ENCODE measurements at regions of chr9 and their contacts with region 1.

Region 1: GRCh38 chr9:69056191-69056815 is 20.8 kb downstream of the FXN start:
- DNase-seq: no peak
- CTCF ChIP-seq: no peak

Region 2: GRCh38 chr9:69018737-69019136 is 37.6 kb before region 1 on chr9:
- CTCF ChIA-PET with region 1: no interaction called
- POLR2A ChIA-PET with region 1: no interaction called
- DNase-seq: no peak
- CTCF ChIP-seq: no peak

Region 3: GRCh38 chr9:69035438-69036308 is 20.6 kb before region 1 on chr9 and contains the start of gene FXN:
- CTCF ChIA-PET with region 1: interaction called, 56 read pairs
- POLR2A ChIA-PET with region 1: no interaction called
- DNase-seq: peak; percentile 93
- CTCF ChIP-seq: peak; percentile 98

Region 4: GRCh38 chr9:69044240-69045219 is 11.8 kb before region 1 on chr9:
- CTCF ChIA-PET with region 1: interaction called, 19 read pairs
- POLR2A ChIA-PET with region 1: no interaction called
- DNase-seq: no peak
- CTCF ChIP-seq: no peak

Region 5: DNA sequence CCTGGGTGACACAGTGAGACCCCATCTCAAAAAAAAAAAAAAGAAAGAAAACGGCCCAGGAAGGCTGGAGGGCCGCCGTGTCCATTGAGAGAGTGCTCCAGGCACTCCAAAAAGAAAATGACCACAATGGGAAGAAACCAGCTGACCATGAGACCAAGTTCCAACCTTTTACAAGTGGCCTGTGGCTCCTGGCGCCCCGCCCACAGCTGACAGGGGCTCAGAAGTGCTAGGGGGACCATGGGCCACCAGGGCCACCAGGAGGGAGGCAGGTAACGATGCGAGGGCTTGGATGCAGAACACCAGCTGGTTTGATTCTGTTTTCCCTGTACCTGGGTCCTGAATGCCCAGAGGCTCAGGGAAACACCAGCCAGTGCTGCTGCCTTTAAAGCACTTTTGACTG is 13.9 kb after region 1 on chr9:
- CTCF ChIA-PET with region 1: interaction called, 17 read pairs
- POLR2A ChIA-PET with region 1: no interaction called
- DNase-seq: no peak
- CTCF ChIP-seq: no peak

Region 6: GRCh38 chr9:69186841-69187611 is 130.7 kb after region 1 on chr9:
- CTCF ChIA-PET with region 1: interaction called, 197 read pairs
- POLR2A ChIA-PET with region 1: no interaction called
- DNase-seq: no peak
- CTCF ChIP-seq: no peak

Region 7: GRCh38 chr9:69199769-69200470 is 143.6 kb after region 1 on chr9:
- CTCF ChIA-PET with region 1: interaction called, 197 read pairs
- POLR2A ChIA-PET with region 1: no interaction called
- DNase-seq: no peak
- CTCF ChIP-seq: no peak

Region 8: GRCh38 chr9:69421908-69422801 is 365.9 kb after region 1 on chr9:
- CTCF ChIA-PET with region 1: interaction called, 10 read pairs
- POLR2A ChIA-PET with region 1: no interaction called
- DNase-seq: peak; percentile 76
- CTCF ChIP-seq: peak; percentile 84

Measured in GM10248 (cell line).